Mammary epithelial cell (primary cell): ENCODE measurements at regions of chr17 and their contacts with region 1.

Region 1: DNA sequence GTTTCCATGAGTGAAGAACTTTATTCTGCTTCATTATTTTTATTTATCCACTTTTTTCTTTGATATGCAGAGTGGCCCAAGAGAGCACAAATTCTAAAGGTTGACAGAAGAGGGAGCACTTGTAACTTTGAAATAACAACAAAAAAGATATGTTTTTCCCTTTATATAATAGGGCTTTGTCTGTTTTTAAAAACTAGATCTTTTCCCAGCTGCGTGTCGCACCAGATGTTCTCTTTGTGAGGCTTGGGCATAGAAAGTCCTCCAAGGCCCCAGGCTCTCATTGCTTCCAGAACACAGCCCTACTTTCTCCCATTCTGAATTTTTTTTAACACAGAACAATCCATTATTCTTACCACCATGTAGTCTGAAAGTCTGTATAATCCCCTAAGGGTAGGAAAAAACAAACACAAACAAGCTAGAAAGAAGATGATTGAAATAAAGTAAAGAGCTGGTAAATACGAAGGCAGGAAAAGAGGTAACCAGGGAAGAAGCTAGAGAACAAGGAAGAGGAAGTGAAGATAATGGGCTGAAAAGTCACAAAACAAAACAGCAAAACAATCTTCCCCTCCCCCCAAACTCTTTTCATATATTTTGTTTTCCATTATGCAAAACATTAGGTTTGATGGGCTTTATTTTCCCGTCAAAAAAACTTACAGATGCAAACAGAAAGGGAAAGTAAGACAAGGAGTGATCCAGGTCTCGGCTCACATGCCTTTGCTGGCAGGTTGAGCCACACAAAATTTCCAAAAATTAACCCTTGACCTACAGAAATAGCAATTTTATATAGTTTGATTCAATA is 160.4 kb downstream of the ABCA8 start:
- DNase-seq: no peak
- H3K4me3 ChIP-seq: peak overlapping the region in 1 of 3 experiments; percentile 9
- H3K27ac ChIP-seq: no peak overlapping the region
- H3K4me1 ChIP-seq: no peaks in the 10 kb centered on the region
- H3K27me3 ChIP-seq: no peaks in the 10 kb centered on the region
- CTCF ChIP-seq: peak; percentile 29 to 43

Region 2: DNA sequence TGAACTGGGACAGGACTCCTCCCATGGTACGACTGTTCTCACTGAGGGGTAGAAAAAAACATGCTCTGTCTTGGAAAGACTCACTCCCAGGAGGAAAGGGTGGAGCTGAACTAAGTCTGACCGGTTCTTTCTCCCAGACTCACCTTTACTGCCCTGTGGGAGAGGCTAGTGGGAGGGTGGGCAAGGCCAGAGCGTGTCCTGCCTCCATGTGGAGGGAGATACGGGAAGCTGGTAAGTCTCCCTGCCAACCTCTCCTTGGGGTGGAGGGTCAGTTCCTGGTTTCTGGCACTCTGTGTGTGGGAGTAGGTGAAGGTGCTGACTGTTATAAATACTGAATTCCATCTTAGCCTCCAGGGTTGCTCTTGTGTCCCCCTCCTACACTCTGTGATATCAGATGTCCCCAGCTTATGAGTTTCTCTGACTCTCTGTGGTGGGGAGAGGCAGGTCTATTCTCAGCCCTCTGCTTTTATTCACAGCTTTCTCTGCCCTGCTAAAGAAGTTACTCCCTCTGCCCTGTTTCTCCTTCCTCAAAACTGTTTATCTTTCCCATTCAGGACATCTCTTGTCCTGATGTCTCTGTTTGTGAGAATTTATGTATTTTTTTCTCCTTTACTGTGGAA is 166.8 kb before region 1 on chr17:
- CTCF ChIA-PET with region 1: no interaction called
- dilution Hi-C with region 1: no loop called
- in situ Hi-C with region 1: no loop called
- intact Hi-C with region 1: no loop called
- DNase-seq: peak; percentile 45
- H3K4me3 ChIP-seq: no peak overlapping the region
- H3K27ac ChIP-seq: no peak overlapping the region
- H3K4me1 ChIP-seq: peaks cover 12% of the 10 kb centered on the region
- H3K27me3 ChIP-seq: no peaks in the 10 kb centered on the region
- CTCF ChIP-seq: no peak

Region 3: GRCh38 chr17:68843522-68843921 is 48.7 kb after region 1 on chr17:
- CTCF ChIA-PET with region 1: no interaction called
- dilution Hi-C with region 1: loop called (anchors 5 kb)
- in situ Hi-C with region 1: no loop called
- intact Hi-C with region 1: no loop called
- DNase-seq: no peak
- H3K4me3 ChIP-seq: no peak overlapping the region
- H3K27ac ChIP-seq: no peak overlapping the region
- H3K4me1 ChIP-seq: no peaks in the 10 kb centered on the region
- H3K27me3 ChIP-seq: peaks cover 5% of the 10 kb centered on the region
- CTCF ChIP-seq: no peak

Region 4: DNA sequence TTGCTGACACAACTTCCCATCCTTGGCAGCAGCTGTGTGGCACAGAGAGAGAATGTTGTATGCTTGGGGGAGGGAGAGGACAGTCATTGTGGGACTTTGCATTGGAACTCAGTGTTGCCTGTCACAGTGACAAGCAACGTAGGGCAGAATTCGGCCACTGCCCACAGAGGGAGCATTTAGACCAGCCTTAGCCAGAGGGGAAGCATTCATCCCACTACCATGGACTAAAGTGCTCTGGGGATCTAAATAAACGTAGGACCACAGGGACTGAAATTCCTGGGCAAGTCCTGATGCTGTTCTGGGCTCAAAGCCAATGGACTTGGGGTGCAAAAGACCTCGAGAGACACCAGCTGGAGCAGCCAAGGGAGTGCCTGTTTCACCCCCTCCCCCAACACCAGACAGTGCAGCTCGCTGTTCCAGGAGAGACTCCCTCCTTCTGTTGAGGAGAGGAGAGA is 115.4 kb after region 1 on chr17:
- CTCF ChIA-PET with region 1: no interaction called
- dilution Hi-C with region 1: no loop called
- in situ Hi-C with region 1: no loop called
- intact Hi-C with region 1: loop called (anchors 1 kb)
- DNase-seq: peak; percentile 5
- H3K4me3 ChIP-seq: no peak overlapping the region
- H3K27ac ChIP-seq: peak overlapping the region; percentile 89
- H3K4me1 ChIP-seq: peaks cover 26% of the 10 kb centered on the region
- H3K27me3 ChIP-seq: no peaks in the 10 kb centered on the region
- CTCF ChIP-seq: no peak

Region 5: GRCh38 chr17:68972119-68972704 is 177.4 kb after region 1 on chr17:
- CTCF ChIA-PET with region 1: no interaction called
- dilution Hi-C with region 1: no loop called
- in situ Hi-C with region 1: no loop called
- intact Hi-C with region 1: loop called (anchors 1 kb)
- DNase-seq: no peak
- H3K4me3 ChIP-seq: no peak overlapping the region
- H3K27ac ChIP-seq: no peak overlapping the region
- H3K4me1 ChIP-seq: no peaks in the 10 kb centered on the region
- H3K27me3 ChIP-seq: no peaks in the 10 kb centered on the region
- CTCF ChIP-seq: peak; percentile 38 to 64